GM18951 (cell line): ENCODE measurements at regions of chr2 and their contacts with region 1.

Region 1: GRCh38 chr2:11784747-11785610 is 38.5 kb downstream of the LPIN1 start:
- POLR2A ChIP-seq: no peak

Region 2: GRCh38 chr2:11692966-11693521 is 91.9 kb before region 1 on chr2:
- in situ Hi-C with region 1: loop called (anchors 10 kb)
- POLR2A ChIP-seq: no peak

Region 3: DNA sequence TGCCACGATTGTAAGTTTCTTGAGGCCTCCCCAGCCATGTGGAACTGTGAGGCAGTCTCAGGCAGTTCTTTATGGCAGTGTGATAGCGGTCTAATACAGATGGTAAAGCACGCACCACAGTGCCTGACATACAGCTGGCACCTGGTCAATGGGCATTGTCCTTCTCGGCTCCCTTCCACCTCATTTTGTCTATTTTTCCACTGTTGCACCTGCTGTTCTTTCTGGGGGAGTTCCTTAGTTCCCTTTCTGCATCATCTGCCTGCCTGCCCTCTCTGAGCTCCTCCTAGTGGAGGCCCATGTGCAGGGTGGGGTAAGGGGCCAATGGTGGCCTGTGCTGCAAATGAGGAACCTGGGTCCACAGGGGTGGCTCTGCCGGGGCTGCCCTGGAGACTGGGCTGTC is 119.0 kb after region 1 on chr2:
- in situ Hi-C with region 1: no loop called
- POLR2A ChIP-seq: no peak